IMR-90 (cell line): ENCODE measurements at regions of chr17 and their contacts with region 1.

Region 1: GRCh38 chr17:78324391-78325075 is 35.3 kb downstream of the SOCS3 start:
- DNase-seq: peak; percentile 89
- ATAC-seq: peak; percentile 86
- H3K4me3 ChIP-seq: no peak overlapping the region
- H3K27ac ChIP-seq: peak overlapping the region; percentile 94
- H3K4me1 ChIP-seq: peaks cover 38% of the 10 kb centered on the region
- H3K27me3 ChIP-seq: no peaks in the 10 kb centered on the region
- CTCF ChIP-seq: no peak
- POLR2A ChIP-seq: no peak; the same call in none of the 2 replicates
- RAD21 ChIP-seq: 0 out of 2 replicates have a peak, but pooled peaks have one; percentile 10

Region 2: DNA sequence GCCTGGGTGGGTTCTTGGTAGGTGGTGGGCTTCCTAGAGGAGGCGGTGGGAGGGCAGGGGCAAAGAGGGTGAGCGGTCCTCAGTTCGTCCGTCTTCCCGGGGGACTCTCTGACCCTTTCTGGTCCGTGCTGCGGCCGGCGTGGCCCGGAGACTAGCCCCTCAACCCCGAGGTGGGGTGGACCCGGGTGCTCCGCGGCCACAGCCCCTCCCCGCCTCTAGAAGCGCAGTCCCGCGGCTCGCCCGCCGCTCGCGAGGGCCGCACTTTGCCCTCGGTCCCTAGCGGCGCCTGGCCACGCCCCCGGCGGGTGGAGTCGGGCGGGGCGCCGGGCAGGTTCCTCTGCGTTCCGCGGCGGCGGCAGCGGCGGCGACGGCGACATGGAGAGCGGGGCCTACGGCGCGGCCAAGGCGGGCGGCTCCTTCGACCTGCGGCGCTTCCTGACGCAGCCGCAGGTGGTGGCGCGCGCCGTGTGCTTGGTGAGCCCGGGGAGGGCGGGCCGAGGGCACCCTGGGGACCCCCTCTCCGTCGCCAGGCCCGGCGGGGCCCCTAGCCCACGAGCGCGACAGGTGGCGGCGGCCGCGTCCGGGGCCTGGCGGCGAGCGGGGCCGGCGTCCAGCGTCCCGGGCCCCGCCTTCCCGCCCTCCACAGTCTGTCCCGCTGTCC is 156.2 kb before region 1 on chr17 and contains the start of gene SYNGR2:
- CTCF ChIA-PET with region 1: no interaction called
- POLR2A ChIA-PET with region 1: no interaction called
- dilution Hi-C with region 1: no loop called
- in situ Hi-C with region 1: no loop called
- intact Hi-C with region 1: no loop called
- DNase-seq: peak; percentile 28
- ATAC-seq: peak; percentile 79
- H3K4me3 ChIP-seq: peak within 1 kb of the TSS; percentile 92
- H3K27ac ChIP-seq: peak within 1 kb of the TSS; percentile 6; the same call in 1 of the 2 replicates
- H3K4me1 ChIP-seq: peaks cover 12% of the 10 kb centered on the region
- H3K27me3 ChIP-seq: no peaks in the 10 kb centered on the region
- CTCF ChIP-seq: no peak
- POLR2A ChIP-seq: peak; percentile 39; the same call in 1 of the 2 replicates
- RAD21 ChIP-seq: no peak
- total RNA-seq, gene SYNGR2: 11.1 and 14.7 TPM in 2 replicates

Region 3: DNA sequence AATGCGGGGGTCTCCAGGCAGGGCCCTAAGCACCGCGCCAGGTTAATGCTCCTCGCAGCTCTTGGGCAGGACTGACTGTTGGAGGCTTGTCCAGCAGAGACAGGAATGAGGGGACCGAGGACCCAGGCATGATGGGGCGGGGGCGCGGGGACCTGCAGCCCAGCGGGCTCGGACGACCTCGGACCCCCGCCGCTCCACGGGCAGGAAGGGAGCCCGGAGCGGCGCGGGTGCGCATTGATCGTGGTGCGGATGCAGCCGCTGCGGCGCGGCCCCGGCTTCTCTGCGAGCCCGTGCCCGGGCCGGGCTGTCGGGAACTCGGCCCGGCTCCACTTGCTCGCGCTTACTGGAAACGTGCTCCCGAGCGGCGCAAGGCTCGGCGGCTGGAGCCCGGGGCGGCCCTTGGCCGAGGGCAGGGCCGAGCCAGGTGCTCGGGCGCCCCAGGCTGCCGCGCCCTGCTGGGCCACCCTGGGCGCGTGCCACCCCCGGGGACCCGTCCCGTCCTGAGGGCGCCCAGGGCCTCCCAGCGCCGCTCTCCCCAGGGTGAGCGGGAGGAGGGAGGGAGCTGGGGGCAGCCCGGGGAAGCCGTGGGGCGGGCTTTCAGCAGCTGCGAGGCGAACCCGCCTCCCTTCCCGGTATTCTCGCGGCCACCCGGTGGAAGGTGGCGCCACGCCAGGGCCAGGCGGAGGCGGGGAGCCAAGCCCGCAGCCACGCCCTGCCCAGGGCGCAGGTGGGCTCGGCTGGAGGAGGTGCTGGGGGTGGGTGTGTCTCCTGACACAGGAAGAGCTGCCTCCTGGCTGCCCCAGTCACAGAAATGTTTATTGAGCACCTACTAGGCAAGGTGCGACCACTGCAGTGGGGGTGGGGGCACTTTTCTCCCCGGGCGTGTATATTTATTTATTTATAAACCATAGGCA is 10.5 kb before region 1 on chr17:
- CTCF ChIA-PET with region 1: no interaction called
- POLR2A ChIA-PET with region 1: interaction called, 10 read pairs
- dilution Hi-C with region 1: no loop called
- in situ Hi-C with region 1: no loop called
- intact Hi-C with region 1: no loop called
- DNase-seq: peak; percentile 59
- ATAC-seq: peak; percentile 71
- H3K4me3 ChIP-seq: peak overlapping the region; percentile 44
- H3K27ac ChIP-seq: peak overlapping the region; percentile 46
- H3K4me1 ChIP-seq: peaks cover 30% of the 10 kb centered on the region
- H3K27me3 ChIP-seq: no peaks in the 10 kb centered on the region
- CTCF ChIP-seq: no peak
- POLR2A ChIP-seq: 0 out of 2 replicates have a peak, but pooled peaks have one; percentile 28
- RAD21 ChIP-seq: no peak